ENCODE measurements at regions of chr19 and their contacts with region 1.

Region 1: DNA sequence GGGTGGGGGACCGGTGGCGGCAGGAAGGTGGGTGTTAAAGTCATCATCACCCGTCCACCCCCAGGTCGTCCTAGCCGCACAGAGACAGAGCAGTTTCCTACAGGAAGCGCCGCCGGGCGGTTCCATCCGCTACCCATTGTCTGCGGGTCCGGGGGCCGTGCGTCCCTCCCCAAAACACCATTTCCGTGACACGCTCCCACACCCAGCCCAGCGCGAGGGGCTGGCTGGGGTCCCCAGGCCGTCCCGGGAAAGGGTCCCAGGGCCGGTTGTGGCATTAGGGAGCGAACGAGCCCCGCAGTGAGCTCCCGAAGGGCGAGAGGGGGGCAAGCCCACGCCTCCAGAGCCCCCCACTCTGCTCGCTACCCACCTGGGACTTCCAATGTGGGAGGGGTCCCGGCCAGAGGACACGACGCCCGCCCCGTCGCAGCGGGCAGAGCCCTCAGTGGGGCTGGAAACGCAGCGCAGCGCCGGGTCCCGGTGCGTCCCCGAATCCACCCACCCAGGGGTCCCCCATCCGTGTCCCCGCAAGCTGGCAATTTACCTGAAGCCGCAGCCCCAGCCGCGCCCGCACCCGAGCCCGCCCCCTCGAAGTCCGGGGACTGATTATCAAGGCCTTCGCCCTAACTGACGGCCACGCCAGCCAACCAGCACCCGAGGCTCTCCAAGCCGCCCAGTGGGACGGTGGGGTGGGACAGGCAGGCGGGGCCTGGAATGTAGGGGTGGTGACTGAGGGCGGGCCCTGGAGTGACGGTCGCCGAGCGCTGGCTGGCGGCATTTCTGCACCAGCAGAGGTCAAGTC is at the start of gene KANK3:
- DNase-seq: peak; percentile 96 to 98
- H3K4me3 ChIP-seq: peak within 1 kb of the TSS in 2 of 3 donors; percentile 37 to 55
- H3K27ac ChIP-seq: peak within 1 kb of the TSS; percentile 73 to 81 (median 76)
- H3K4me1 ChIP-seq: peaks cover 6 to 8% of the 10 kb centered on the region in 2 donors
- H3K27me3 ChIP-seq: no peaks in the 10 kb centered on the region
- CTCF ChIP-seq: peak in 1 of 6 experiments; percentile 14
- POLR2A ChIP-seq: peak in 1 of 2 donors; percentile 68
- total RNA-seq, gene KANK3: 21.1 to 49.7 (median 30.5) TPM

Region 2: DNA sequence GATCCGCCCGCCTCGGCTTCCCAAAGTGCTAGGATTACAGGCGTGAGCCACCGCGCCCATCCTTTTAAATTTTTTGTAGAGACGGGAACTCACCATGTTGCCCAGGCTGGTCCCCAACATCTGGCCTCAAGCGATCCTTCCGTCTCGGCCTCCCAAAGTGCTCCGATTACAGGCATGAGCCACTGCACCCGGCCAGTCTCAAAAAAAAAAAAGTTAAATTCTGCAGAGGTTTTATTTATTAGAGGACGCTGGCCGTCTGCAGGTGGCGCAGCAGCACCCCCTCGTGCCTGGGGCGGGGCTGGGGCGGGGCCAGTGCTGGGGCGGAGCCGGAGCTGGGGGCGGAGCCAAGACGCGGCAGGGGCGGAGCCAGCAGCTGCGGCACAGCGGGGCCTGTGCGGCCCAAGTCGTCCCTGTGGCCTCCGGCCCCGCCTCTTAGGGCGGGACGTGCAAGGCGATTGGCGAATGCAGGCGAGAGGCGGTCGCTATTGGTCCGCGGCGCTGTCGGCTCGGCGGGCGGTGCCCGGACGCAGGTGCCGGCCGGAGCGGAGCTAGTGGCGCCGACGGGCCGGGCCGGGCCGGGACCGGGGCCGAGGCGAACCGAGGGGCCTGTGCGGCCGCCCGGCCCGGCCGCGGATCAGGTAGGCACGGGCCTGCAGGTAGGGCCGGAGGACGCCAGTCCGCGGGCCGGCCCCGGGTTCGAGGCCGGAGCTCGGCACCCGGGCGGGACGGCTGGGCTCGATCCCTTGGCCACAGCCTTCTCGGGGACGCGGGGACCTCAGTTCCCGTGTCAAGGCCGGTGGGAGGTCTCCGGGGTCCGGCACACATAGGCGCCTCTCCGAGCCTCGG is 70.1 kb after region 1 on chr19 and contains the start of gene MARCHF2:
- intact Hi-C with region 1: no loop called
- DNase-seq: peak; percentile 98
- H3K4me3 ChIP-seq: peak within 1 kb of the TSS; percentile 11 to 76 (median 51)
- H3K27ac ChIP-seq: peak within 1 kb of the TSS in 1 of 3 donors; percentile 66
- H3K4me1 ChIP-seq: peaks cover 27 to 39% of the 10 kb centered on the region in 2 donors
- H3K27me3 ChIP-seq: no peaks in the 10 kb centered on the region
- CTCF ChIP-seq: peak; percentile 34 to 85 (median 59)
- POLR2A ChIP-seq: peak; percentile 43 to 75
- total RNA-seq, gene MARCHF2: 168 to 245 (median 215) TPM

Region 3: DNA sequence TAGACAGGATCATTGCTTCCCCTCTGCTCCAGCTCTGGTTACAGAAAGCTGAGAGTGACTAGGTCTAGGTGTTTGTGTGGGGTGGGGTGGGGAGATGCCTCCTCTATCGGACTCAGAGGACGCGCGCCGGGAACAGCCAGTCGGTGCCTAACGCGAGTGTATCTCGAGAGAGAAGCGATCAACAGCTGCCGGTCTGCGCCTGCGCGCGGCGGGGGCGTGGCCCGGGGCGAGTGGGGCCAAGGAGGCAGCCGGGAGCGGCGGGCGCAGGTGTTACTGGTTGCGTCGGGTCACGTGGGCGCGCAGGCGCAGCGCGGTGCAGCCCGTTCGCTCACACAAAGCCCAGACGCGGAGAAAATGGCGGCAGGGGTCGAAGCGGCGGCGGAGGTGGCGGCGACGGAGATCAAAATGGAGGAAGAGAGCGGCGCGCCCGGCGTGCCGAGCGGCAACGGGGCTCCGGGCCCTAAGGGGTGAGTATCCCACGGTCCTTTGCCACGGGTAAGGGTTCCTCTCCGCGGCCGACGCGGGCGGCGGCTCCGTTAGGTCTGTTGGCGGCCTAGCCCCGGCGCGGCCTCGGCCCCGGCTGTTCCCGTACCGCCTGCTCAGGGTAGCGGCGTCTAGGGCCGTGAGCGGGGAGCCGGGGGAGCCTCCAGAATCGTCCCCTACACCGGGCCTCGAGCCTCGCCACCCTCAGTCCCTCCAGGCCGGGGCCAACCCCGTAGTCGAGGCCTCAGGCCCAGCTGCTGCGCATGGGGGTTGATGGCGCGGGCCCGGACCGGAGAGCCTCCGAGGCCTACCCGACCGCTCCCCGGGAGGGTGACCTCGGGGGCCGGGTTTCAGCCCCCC is 102.0 kb after region 1 on chr19 and contains the start of gene HNRNPM:
- intact Hi-C with region 1: loop called (anchors 10 kb)
- DNase-seq: peak; percentile 99 to 100
- H3K4me3 ChIP-seq: peak within 1 kb of the TSS; percentile 92 to 98 (median 93)
- H3K27ac ChIP-seq: peak within 1 kb of the TSS; percentile 97 to 98 (median 98)
- H3K4me1 ChIP-seq: peaks cover 35 to 40% of the 10 kb centered on the region in 2 donors
- H3K27me3 ChIP-seq: no peaks in the 10 kb centered on the region
- CTCF ChIP-seq: peak in 1 of 6 experiments; percentile 4
- POLR2A ChIP-seq: peak in 1 of 2 donors; percentile 96
- total RNA-seq, gene HNRNPM: 79.3 to 138 (median 97.2) TPM

Measured in thyroid gland (tissue), 4 donors.